ENCODE measurements at regions of chrX and their contacts with region 1.

Region 1: DNA sequence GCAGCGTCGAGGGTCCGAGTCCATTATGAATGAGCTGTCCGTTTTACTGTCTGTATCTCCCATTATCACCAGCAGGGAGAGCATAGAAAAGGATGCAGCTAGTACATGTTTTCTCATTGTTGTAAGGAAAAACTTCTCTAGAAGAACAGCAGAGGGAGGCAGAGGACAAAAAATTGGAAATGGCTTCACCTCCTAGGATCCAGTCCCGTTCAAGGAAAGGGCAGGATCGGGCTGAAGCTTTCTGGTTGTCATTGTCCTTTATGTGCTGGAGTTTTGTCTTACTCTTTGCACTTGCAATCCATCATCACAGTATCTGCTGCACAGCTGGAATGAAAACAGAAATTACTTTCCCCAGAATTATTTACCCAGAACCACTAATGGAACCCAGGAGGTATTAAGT is 14.7 kb downstream of the NDP start:
- DNase-seq: no peak
- H3K4me3 Mint-ChIP-seq: no peak overlapping the region
- H3K27ac Mint-ChIP-seq: no peak overlapping the region
- H3K4me1 Mint-ChIP-seq: peaks cover 6% of the 10 kb centered on the region
- H3K27me3 Mint-ChIP-seq: peaks cover 5% of the 10 kb centered on the region

Region 2: DNA sequence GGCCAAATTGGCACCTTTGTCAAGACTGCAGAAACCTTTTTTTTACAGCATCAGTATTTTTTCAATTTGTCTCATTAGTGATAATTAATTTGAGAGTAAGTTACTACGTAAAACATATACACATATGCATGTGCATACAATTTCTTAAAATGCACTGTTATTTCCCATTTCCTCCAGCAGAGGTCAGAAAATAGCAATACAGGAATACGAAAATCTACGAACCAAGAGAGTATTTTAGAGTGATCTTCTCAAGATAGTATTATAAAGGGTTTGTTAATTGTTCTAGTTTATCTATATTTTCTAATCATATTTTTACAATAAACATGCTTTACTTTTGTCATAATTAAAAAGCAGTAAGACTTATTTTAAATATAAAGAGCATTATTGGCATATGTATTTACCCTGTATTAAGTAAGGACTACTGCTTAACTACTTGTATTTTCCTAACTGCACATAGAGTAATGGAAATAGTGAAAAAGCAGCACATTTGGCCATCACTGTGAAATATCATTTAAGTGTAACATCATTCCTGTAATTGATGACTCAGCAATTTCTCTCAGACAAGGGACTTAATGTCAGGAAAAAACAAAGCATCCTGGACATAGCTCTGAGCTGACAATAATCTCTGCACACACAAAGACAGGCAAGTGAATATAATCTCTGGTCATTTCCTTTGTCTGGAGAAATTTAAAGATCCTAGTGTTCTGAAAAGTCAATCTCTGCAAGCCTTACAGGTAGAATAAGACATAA is 121.9 kb before region 1 on chrX:
- intact Hi-C with region 1: loop called (anchors 10 kb)
- DNase-seq: no peak
- H3K4me3 Mint-ChIP-seq: no peak overlapping the region
- H3K27ac Mint-ChIP-seq: no peak overlapping the region
- H3K4me1 Mint-ChIP-seq: no peaks in the 10 kb centered on the region
- H3K27me3 Mint-ChIP-seq: peaks cover 2% of the 10 kb centered on the region

Region 3: GRCh38 chrX:43969504-43970501 is 11.3 kb after region 1 on chrX:
- intact Hi-C with region 1: no loop called
- DNase-seq: no peak
- H3K4me3 Mint-ChIP-seq: no peak overlapping the region
- H3K27ac Mint-ChIP-seq: no peak overlapping the region
- H3K4me1 Mint-ChIP-seq: peaks cover 10% of the 10 kb centered on the region
- H3K27me3 Mint-ChIP-seq: peaks cover 4% of the 10 kb centered on the region

Region 4: GRCh38 chrX:44244008-44244407 is 285.5 kb after region 1 on chrX:
- intact Hi-C with region 1: loop called (anchors 1 kb)
- DNase-seq: no peak
- H3K4me3 Mint-ChIP-seq: no peak overlapping the region
- H3K27ac Mint-ChIP-seq: no peak overlapping the region
- H3K4me1 Mint-ChIP-seq: peaks cover 18% of the 10 kb centered on the region
- H3K27me3 Mint-ChIP-seq: peaks cover 2% of the 10 kb centered on the region

Region 5: DNA sequence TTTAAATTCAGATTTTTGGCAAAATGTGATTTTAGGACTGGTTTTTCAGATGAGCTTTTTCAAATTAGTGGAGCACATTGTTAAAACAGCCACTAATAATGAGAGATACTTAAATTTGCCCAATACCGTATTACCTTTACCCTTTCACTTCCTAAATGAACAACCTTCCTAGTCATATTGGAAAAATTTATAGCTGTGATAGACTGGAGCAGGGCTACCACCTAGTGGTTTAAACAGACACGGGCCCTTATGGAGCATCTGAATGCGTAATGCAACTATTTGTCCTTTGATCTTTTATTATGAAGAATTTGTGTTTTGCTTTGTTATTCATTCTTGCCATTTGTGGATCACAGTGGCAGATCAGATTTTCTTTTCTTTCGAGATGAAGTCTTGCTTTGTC is 987.2 kb after region 1 on chrX:
- intact Hi-C with region 1: loop called (anchors 5 kb)
- DNase-seq: no peak
- H3K4me3 Mint-ChIP-seq: no peak overlapping the region
- H3K27ac Mint-ChIP-seq: no peak overlapping the region
- H3K4me1 Mint-ChIP-seq: peaks cover 13% of the 10 kb centered on the region
- H3K27me3 Mint-ChIP-seq: no peaks in the 10 kb centered on the region

Region 6: GRCh38 chrX:45186643-45187026 is 1228.1 kb after region 1 on chrX:
- intact Hi-C with region 1: loop called (anchors 5 kb)
- DNase-seq: no peak
- H3K4me3 Mint-ChIP-seq: peak overlapping the region; percentile 87
- H3K27ac Mint-ChIP-seq: peak overlapping the region; percentile 78
- H3K4me1 Mint-ChIP-seq: peaks cover 26% of the 10 kb centered on the region
- H3K27me3 Mint-ChIP-seq: no peaks in the 10 kb centered on the region